Common myeloid progenitor, CD34-positive (primary cell): ENCODE measurements at regions of chr5 and their contacts with region 1.

Region 1: DNA sequence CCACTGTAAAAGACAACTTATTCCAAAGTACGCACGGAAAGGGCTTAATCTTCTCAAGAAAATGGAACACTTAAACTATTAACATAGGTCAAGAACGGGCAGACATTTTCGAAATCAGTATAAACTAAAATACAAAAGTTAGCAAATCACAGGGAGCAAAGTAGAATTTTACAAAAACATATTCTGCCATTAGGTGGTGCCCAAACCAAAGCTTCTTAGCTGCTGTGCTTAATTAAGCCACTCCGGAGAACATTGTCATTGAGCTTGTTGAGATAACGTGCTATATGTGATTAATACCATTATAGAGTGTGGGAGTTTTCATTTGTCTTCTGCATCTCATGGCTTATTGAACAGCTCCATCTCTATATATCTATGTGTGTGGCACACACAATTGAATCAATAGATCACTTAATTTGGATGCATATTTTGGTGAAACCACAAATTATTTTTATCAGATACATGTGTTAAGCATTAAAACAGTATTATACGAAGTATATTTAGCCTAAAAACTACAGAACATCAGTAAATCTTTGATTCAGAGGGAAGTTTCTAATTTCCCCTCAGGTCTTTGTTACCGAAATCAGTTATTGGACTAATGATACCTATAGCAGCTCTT is 23.4 kb downstream of the UBLCP1 start:
- DNase-seq: peak; percentile 60 to 81 (median 79)
- H3K4me3 ChIP-seq: no peak overlapping the region
- H3K27ac ChIP-seq: no peak overlapping the region
- H3K4me1 ChIP-seq: peaks cover 0 to 4% (median 2%) of the 10 kb centered on the region in 4 experiments
- H3K27me3 ChIP-seq: no peaks in the 10 kb centered on the region

Region 2: GRCh38 chr5:159178978-159179377 is 107.5 kb before region 1 on chr5:
- CTCF ChIA-PET with region 1: no interaction called
- POLR2A ChIA-PET with region 1: no interaction called
- DNase-seq: peak in 2 of 3 donors; percentile 73 to 75
- H3K4me3 ChIP-seq: no peak overlapping the region
- H3K27ac ChIP-seq: no peak overlapping the region
- H3K4me1 ChIP-seq: peaks cover 6 to 43% (median 25%) of the 10 kb centered on the region in 4 experiments
- H3K27me3 ChIP-seq: no peaks in the 10 kb centered on the region

Region 3: GRCh38 chr5:159316519-159317383 is 30.2 kb after region 1 on chr5:
- CTCF ChIA-PET with region 1: interaction called, 48 read pairs
- POLR2A ChIA-PET with region 1: no interaction called
- DNase-seq: peak; percentile 66 to 79 (median 75)
- H3K4me3 ChIP-seq: no peak overlapping the region
- H3K27ac ChIP-seq: no peak overlapping the region
- H3K4me1 ChIP-seq: no peaks in the 10 kb centered on the region
- H3K27me3 ChIP-seq: peaks cover 0 to 3% (median 0%) of the 10 kb centered on the region in 5 experiments

Region 4: DNA sequence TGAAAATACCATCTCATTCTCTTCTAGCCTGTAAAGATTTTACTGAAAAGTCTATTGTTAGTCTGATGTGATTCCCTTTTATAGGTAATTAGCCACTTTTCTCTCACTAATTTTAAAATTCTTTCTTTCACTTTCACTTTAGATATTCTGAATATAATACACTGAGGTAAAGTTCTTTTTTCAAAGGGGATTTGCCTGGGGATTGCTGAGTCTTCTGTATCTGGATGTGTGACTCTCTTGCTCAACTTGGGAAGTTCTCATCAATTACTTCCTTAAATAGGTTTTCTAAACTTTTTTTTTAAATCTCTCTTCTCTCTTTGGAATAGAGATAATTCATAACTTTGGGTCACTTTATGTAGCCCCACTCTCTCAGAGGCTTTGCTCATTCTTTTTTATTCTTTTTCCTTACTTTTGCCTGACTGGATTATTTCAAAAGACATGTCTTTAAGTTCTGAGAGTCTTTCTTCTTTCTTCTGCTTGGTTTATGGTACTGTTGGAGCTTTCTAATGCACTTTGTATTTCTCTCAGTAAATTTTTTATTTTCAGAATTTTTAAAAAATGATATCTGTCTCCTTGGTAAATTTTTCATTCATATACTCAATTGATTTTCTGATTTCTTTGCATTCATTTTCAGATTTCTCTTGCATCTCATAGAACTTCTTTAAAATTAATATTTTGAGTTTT is 99.6 kb after region 1 on chr5:
- CTCF ChIA-PET with region 1: no interaction called
- POLR2A ChIA-PET with region 1: no interaction called
- DNase-seq: peak in 2 of 3 donors; percentile 18 to 19
- H3K4me3 ChIP-seq: no peak overlapping the region
- H3K27ac ChIP-seq: no peak overlapping the region
- H3K4me1 ChIP-seq: no peaks in the 10 kb centered on the region
- H3K27me3 ChIP-seq: no peaks in the 10 kb centered on the region